ENCODE measurements at regions of chr10 and their contacts with region 1.

Region 1: GRCh38 chr10:122435212-122435827 is 19.1 kb upstream of the ARMS2 start:
- DNase-seq: peak; percentile 64
- H3K4me3 ChIP-seq: no peak overlapping the region
- H3K27ac ChIP-seq: no peak overlapping the region
- H3K4me1 ChIP-seq: no peaks in the 10 kb centered on the region
- H3K27me3 ChIP-seq: no peaks in the 10 kb centered on the region
- CTCF ChIP-seq: peak; percentile 8 to 23
- POLR2A ChIP-seq: no peak

Region 2: GRCh38 chr10:122267849-122268737 is 167.2 kb before region 1 on chr10:
- CTCF ChIA-PET with region 1: interaction called, 11 read pairs
- POLR2A ChIA-PET with region 1: no interaction called
- dilution Hi-C with region 1: no loop called
- intact Hi-C with region 1: no loop called
- DNase-seq: peak; percentile 47
- H3K4me3 ChIP-seq: no peak overlapping the region
- H3K27ac ChIP-seq: peak overlapping the region; percentile 74
- H3K4me1 ChIP-seq: peaks cover 20% of the 10 kb centered on the region
- H3K27me3 ChIP-seq: no peaks in the 10 kb centered on the region
- CTCF ChIP-seq: peak; percentile 96 to 97
- POLR2A ChIP-seq: no peak

Region 3: GRCh38 chr10:122307669-122308486 is 127.4 kb before region 1 on chr10:
- CTCF ChIA-PET with region 1: interaction called, 17 read pairs
- POLR2A ChIA-PET with region 1: no interaction called
- dilution Hi-C with region 1: no loop called
- intact Hi-C with region 1: no loop called
- DNase-seq: peak; percentile 99
- H3K4me3 ChIP-seq: peak overlapping the region in 1 of 3 experiments; percentile 55
- H3K27ac ChIP-seq: peak overlapping the region; percentile 93
- H3K4me1 ChIP-seq: peaks cover 44% of the 10 kb centered on the region
- H3K27me3 ChIP-seq: no peaks in the 10 kb centered on the region
- CTCF ChIP-seq: no peak
- POLR2A ChIP-seq: no peak

Region 4: GRCh38 chr10:122374237-122374869 is 61.0 kb before region 1 on chr10 and contains the start of gene PLEKHA1:
- CTCF ChIA-PET with region 1: interaction called, 14 read pairs
- POLR2A ChIA-PET with region 1: interaction called, 3 read pairs
- dilution Hi-C with region 1: no loop called
- intact Hi-C with region 1: no loop called
- DNase-seq: peak; percentile 96
- H3K4me3 ChIP-seq: peak within 1 kb of the TSS; percentile 85 to 93 (median 89)
- H3K27ac ChIP-seq: peak within 1 kb of the TSS; percentile 84
- H3K4me1 ChIP-seq: peaks cover 15% of the 10 kb centered on the region
- H3K27me3 ChIP-seq: no peaks in the 10 kb centered on the region
- CTCF ChIP-seq: no peak
- POLR2A ChIP-seq: peak; percentile 56
- total RNA-seq, gene PLEKHA1: 58.0 and 58.8 TPM in 2 replicates

Region 5: GRCh38 chr10:122446668-122447423 is 11.5 kb after region 1 on chr10:
- CTCF ChIA-PET with region 1: interaction called, 12 read pairs
- POLR2A ChIA-PET with region 1: no interaction called
- dilution Hi-C with region 1: no loop called
- intact Hi-C with region 1: no loop called
- DNase-seq: no peak
- H3K4me3 ChIP-seq: no peak overlapping the region
- H3K27ac ChIP-seq: no peak overlapping the region
- H3K4me1 ChIP-seq: peaks cover 23% of the 10 kb centered on the region
- H3K27me3 ChIP-seq: no peaks in the 10 kb centered on the region
- CTCF ChIP-seq: no peak
- POLR2A ChIP-seq: no peak

Region 6: DNA sequence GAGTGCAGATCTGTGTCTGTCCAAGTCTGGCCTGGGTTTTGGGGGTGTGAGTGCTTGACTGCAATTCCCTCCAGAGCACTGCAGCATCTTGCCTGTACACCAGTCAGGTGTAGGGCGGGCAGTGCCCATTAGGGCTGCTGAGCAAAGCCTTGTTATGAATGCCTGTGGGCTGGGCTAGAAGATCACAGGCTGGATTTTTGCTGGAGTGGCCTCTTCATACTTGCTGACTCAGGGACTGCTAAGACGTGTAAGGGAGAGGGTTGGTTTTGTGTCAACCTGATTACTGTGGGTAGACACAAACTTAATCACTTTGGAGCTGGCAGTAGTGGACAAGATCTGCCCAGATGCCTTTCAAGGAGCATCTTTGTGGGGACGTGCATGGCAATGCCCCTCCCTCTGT is 154.8 kb after region 1 on chr10:
- CTCF ChIA-PET with region 1: no interaction called
- POLR2A ChIA-PET with region 1: no interaction called
- dilution Hi-C with region 1: no loop called
- intact Hi-C with region 1: no loop called
- DNase-seq: no peak
- H3K4me3 ChIP-seq: no peak overlapping the region
- H3K27ac ChIP-seq: no peak overlapping the region
- H3K4me1 ChIP-seq: no peaks in the 10 kb centered on the region
- H3K27me3 ChIP-seq: no peaks in the 10 kb centered on the region
- CTCF ChIP-seq: no peak
- POLR2A ChIP-seq: no peak